ENCODE measurements at regions of chr3 and their contacts with region 1.

Region 1: DNA sequence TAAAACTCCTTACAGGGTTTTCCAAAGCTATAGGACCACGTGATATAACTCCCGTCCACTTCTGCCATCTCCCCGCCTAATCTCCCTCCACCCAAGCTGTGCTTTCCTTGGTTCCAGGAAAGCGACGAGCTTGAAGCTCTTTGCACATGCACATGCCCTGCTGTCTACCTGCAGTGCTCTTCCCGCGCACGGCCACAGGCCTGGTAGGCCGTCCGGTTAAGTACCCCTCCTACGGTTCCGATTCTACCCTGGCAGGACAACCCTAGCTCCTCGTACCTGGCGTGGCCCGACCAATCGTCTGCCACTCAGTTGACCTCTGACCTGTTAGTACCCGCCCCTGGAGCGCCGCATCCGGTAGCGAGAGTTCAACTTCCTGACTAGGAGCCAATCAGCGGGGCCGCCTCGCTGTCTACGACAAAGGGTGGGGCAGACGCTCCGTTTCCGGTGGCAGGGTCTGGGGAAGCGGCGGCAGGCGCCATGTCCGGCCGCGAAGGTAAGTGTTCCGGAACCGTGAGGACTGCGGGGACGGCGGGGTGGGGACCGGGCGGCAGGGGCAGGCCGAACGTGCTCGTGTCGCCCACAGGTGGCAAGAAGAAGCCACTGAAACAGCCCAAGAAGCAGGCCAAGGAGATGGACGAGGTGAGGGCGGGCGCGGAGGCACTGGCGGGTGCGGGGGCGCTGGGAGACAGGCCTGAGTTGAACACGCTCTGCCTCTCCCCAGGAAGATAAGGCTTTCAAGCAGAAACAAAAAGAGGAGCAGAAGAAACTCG is at the starts of genes CCDC51 and TMA7:
- DNase-seq: peak; percentile 99
- H3K4me3 Mint-ChIP-seq: peak within 1 kb of the TSS; percentile 90
- H3K27ac Mint-ChIP-seq: peak within 1 kb of the TSS; percentile 87
- H3K4me1 Mint-ChIP-seq: peaks cover 32% of the 10 kb centered on the region
- H3K27me3 Mint-ChIP-seq: no peaks in the 10 kb centered on the region
- total RNA-seq, gene CCDC51: 24.3 to 24.4 TPM
- total RNA-seq, gene TMA7: 318 to 323 TPM

Region 2: DNA sequence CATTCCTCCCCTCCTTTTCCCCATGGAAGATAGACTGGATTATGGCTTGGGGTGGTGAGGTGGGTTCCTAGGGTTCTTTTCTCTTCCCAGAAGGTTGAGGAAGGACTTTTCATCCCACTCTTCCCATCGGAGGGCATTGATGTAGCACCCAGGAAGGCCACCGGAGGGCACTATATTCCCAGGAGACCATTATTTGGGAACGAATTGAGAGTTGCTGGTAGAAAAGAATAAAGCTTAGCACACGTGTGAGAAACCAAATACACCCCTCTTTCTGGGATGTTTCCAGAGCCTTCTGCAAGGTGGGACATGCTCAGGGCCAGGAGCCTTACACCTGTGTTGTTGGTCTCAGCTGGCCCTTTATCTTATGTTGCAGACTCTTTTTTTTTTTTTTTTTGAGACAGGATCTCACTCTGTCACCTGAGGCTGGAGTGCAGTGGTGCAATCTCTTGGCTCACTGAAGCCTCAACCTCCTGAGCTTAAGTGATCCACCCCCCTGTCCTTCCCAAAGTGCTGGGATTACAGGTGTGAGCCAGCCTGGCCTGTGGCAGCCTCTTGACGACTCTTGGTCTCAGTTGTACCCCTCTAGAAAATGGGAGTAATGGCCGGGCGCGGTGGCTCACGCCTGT is 245.4 kb before region 1 on chr3:
- CTCF ChIA-PET with region 1: interaction called, 31 read pairs
- POLR2A ChIA-PET with region 1: no interaction called
- intact Hi-C with region 1: loop called (anchors 2 kb)
- DNase-seq: peak; percentile 55
- H3K4me3 Mint-ChIP-seq: no peak overlapping the region
- H3K27ac Mint-ChIP-seq: no peak overlapping the region
- H3K4me1 Mint-ChIP-seq: no peaks in the 10 kb centered on the region
- H3K27me3 Mint-ChIP-seq: peaks cover 5% of the 10 kb centered on the region

Region 3: GRCh38 chr3:48268381-48269183 is 171.4 kb before region 1 on chr3:
- CTCF ChIA-PET with region 1: interaction called, 156 read pairs
- POLR2A ChIA-PET with region 1: interaction called, 6 read pairs
- intact Hi-C with region 1: loop called (anchors 1 kb)
- DNase-seq: peak; percentile 95
- H3K4me3 Mint-ChIP-seq: peak overlapping the region; percentile 33
- H3K27ac Mint-ChIP-seq: peak overlapping the region; percentile 89
- H3K4me1 Mint-ChIP-seq: peaks cover 37% of the 10 kb centered on the region
- H3K27me3 Mint-ChIP-seq: no peaks in the 10 kb centered on the region

Region 4: DNA sequence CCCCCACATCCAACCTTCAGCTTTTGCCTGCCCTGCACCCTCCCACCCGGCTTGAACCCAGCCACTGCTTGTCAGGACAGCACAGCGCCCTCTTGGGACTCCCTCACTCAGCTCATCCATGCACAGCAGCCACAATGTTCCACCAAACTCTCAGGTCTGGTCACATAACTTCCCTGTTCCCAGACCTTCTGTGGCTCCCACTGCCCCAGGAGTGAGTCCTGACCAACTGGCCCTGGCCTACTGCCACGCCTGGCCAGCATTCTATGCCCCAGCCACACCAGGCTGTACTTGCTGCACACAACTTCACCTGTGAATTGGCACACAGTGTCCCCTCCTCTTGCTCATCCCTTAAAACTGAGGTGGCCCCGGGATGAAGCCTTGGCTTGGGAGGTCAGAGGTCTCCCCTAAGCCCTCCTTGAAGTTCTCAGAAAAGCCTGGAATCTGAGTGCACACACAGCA is 31.2 kb before region 1 on chr3:
- CTCF ChIA-PET with region 1: interaction called, 290 read pairs
- POLR2A ChIA-PET with region 1: no interaction called
- intact Hi-C with region 1: no loop called
- DNase-seq: peak; percentile 15
- H3K4me3 Mint-ChIP-seq: no peak overlapping the region
- H3K27ac Mint-ChIP-seq: no peak overlapping the region
- H3K4me1 Mint-ChIP-seq: no peaks in the 10 kb centered on the region
- H3K27me3 Mint-ChIP-seq: no peaks in the 10 kb centered on the region

Region 5: DNA sequence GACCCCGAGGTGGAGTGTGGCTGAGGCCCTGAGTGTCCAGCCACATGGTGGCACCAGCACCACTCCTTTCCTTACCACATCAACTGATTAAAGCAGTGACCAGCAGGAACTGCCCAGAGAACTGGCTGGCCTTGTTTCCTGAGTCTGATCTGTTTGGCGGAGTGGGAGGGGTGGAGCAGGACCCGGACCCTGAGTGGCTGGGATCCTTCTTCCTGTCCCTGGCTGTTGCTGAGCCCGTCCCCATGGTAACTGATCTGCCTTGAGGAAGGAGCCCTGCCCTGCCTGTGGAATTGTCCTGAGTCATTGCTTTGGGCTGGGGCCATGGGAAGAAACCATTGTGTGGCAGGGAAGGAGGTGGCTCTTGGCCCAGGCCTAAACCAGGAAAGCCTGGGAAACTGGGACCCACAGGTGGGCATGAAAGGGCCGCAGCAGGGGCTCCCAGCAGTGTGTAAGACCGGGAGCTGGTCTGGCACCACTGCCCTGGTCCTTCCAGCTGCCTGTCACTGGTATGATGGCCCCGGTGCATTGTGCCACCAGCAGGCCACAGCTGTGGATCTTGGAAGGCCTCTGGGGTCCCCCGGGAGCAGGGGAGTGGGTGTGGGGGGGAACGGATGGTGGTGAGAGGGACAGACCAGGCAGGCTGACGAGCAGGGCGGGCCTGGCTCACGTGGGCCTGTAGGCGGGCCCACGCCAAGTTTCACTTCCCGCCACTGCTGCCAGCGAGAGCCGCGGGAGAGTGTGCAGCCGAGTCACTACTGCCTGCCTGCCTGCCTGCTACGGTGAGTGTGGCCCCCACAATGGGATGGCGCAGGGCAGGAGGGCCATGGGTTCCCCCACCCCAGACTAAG is 25.8 kb after region 1 on chr3:
- CTCF ChIA-PET with region 1: interaction called, 40 read pairs
- POLR2A ChIA-PET with region 1: interaction called, 15 read pairs
- intact Hi-C with region 1: no loop called
- DNase-seq: peak; percentile 90
- H3K4me3 Mint-ChIP-seq: peak overlapping the region; percentile 97
- H3K27ac Mint-ChIP-seq: peak overlapping the region; percentile 95
- H3K4me1 Mint-ChIP-seq: peaks cover 46% of the 10 kb centered on the region
- H3K27me3 Mint-ChIP-seq: no peaks in the 10 kb centered on the region

Region 6: DNA sequence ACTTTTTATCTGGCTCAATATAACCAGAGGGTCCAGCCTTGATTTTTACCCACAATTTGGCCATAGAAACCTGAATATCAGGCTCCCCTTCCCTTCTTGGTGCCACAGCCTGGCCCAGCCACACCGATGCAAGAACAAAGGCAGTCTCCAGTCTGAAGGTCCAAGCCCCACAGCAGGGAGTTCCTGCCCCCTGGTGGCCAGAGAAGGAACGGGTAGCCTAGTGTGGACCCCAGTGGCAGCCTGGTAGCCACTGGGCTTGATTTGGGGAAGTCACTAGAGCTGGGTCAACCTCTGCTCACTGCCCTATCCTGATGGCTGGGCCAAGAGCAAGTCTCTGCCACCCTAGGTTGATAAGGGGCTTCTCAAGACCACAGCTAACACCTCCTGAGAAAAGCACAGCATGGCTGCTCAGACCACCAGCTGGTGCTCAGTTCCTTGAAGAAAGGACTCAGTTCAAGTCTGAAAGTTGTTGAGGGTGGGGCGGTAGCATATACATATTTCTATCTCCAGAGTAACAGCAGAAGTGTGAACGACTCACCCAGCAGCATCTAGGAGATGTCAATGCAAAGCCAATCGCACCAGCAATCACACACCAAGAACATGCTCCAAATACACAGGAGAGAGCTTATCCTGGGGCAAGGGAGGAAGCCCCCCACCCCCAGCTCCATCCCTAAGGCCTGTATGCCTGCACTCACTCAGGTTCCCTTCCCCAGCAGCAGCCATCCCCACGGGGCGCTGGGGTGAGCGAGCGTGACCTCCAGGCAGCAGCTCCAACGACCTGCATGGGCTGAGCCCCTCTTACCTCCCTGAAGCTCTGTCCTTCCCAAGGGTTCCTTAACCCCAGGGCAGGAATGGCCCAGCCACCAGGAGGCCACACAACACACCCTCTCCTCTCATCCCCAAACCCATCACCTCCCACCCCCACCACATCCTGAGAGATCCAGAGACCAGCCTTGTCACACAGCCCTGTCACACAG is 109.0 kb after region 1 on chr3:
- CTCF ChIA-PET with region 1: interaction called, 45 read pairs
- POLR2A ChIA-PET with region 1: interaction called, 3 read pairs
- intact Hi-C with region 1: no loop called
- DNase-seq: peak; percentile 90
- H3K4me3 Mint-ChIP-seq: no peak overlapping the region
- H3K27ac Mint-ChIP-seq: no peak overlapping the region
- H3K4me1 Mint-ChIP-seq: peaks cover 7% of the 10 kb centered on the region
- H3K27me3 Mint-ChIP-seq: no peaks in the 10 kb centered on the region

Region 7: GRCh38 chr3:49358217-49358883 is 918.3 kb after region 1 on chr3 and contains the start of gene GPX1:
- CTCF ChIA-PET with region 1: no interaction called
- POLR2A ChIA-PET with region 1: no interaction called
- intact Hi-C with region 1: no loop called
- DNase-seq: peak; percentile 92
- H3K4me3 Mint-ChIP-seq: peak within 1 kb of the TSS; percentile 95
- H3K27ac Mint-ChIP-seq: peak within 1 kb of the TSS; percentile 92
- H3K4me1 Mint-ChIP-seq: peaks cover 22% of the 10 kb centered on the region
- H3K27me3 Mint-ChIP-seq: no peaks in the 10 kb centered on the region
- total RNA-seq, gene GPX1: 176 to 177 TPM

Measured in activated CD4-positive, alpha-beta memory T cell treated with anti-CD3 and anti-CD28 coated beads for 36 hours (primary cell).